ENCODE measurements at regions of chr16 and their contacts with region 1.

Region 1: DNA sequence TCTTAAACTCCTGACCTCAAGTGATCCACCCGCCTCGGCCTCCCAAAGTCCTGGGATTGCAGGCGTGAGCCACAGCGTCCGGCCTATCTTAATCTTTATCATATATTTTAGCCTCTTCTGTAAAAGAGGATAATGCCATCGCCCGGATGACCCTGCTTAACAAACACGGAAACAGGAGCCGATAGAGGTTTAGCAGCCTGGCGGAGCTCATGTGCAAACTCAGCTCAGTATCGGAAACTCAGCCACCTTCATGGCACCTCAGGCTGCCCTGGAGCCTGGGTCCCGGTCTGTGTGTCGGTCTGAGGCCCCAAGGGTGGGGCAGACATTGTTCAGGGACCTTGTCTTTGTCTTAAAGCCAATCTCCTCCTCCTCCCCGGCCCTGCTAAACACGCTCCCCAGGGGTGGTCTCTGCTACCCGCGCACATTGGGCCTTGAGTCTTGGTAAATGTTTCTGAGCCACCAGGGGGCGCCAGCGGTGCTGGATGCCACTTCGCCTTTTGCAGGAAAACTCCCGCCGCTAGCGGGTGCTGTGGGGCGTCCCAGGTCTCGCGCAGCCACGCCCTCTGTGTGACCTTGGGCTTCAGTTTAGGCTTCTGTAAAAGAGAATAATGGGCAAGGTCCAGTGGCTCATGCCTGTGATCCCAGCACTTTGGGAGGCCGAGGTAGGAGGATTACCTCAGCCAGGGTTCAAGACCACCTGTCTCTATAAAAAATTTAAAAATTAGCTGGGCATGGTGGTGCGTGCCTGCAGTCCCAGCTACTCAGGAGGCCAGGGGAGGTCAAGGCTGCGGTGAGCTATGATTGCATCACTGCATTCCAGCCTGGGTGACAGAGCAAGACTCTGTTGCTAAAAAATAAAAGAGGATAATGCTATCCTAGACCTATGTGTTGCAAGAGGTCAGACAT is 2.7 kb downstream of the CETP start:
- DNase-seq: peak; percentile 94
- ATAC-seq: peak; percentile 92
- H3K4me3 ChIP-seq: no peak overlapping the region
- H3K4me3 Mint-ChIP-seq: no peak overlapping the region
- H3K27ac ChIP-seq: peak overlapping the region; percentile 4 to 20
- H3K27ac Mint-ChIP-seq: peak overlapping the region; percentile 83
- H3K4me1 ChIP-seq: peaks cover 17 to 22% of the 10 kb centered on the region in 2 donors
- H3K4me1 Mint-ChIP-seq: peaks cover 23% of the 10 kb centered on the region
- H3K27me3 ChIP-seq: no peaks in the 10 kb centered on the region
- H3K27me3 Mint-ChIP-seq: no peaks in the 10 kb centered on the region
- CTCF ChIP-seq: peak; percentile 99

Region 2: DNA sequence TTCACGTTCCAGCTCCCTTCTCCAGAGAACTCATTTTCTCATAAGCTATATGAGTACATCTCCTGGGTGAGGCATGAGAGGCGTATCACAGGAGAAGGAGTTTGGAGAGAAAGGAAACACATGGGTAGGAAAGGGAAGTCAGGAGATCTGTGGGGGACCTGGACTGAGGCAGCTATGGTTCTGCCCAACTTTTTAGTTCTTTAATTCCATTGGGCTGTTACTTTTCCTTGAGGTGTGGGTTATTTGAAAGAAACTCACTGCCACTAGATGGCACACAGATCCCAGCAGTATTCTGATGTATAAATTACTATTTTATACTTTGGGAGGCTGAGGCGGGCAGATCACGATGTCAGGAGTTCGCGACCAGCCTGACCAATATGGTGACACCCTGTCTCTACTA is 171.0 kb before region 1 on chr16:
- CTCF ChIA-PET with region 1: interaction called, 10 read pairs
- POLR2A ChIA-PET with region 1: no interaction called
- intact Hi-C with region 1: no loop called
- DNase-seq: peak; percentile 33
- ATAC-seq: no peak
- H3K4me3 ChIP-seq: no peak overlapping the region
- H3K4me3 Mint-ChIP-seq: no peak overlapping the region
- H3K27ac ChIP-seq: no peak overlapping the region
- H3K27ac Mint-ChIP-seq: no peak overlapping the region
- H3K4me1 ChIP-seq: no peaks in the 10 kb centered on the region
- H3K4me1 Mint-ChIP-seq: no peaks in the 10 kb centered on the region
- H3K27me3 ChIP-seq: no peaks in the 10 kb centered on the region
- H3K27me3 Mint-ChIP-seq: no peaks in the 10 kb centered on the region
- CTCF ChIP-seq: no peak

Region 3: GRCh38 chr16:56950881-56951771 is 13.4 kb before region 1 on chr16:
- CTCF ChIA-PET with region 1: interaction called, 79 read pairs
- POLR2A ChIA-PET with region 1: interaction called, 6 read pairs
- intact Hi-C with region 1: loop called (anchors 1 kb)
- DNase-seq: peak; percentile 92
- ATAC-seq: peak; percentile 84
- H3K4me3 ChIP-seq: peak overlapping the region in 1 of 5 experiments; percentile 1
- H3K4me3 Mint-ChIP-seq: peak overlapping the region; percentile 68
- H3K27ac ChIP-seq: peak overlapping the region; percentile 42 to 58
- H3K27ac Mint-ChIP-seq: peak overlapping the region; percentile 83
- H3K4me1 ChIP-seq: peaks cover 24 to 26% of the 10 kb centered on the region in 2 donors
- H3K4me1 Mint-ChIP-seq: peaks cover 41% of the 10 kb centered on the region
- H3K27me3 ChIP-seq: no peaks in the 10 kb centered on the region
- H3K27me3 Mint-ChIP-seq: no peaks in the 10 kb centered on the region
- CTCF ChIP-seq: peak; percentile 49

Region 4: DNA sequence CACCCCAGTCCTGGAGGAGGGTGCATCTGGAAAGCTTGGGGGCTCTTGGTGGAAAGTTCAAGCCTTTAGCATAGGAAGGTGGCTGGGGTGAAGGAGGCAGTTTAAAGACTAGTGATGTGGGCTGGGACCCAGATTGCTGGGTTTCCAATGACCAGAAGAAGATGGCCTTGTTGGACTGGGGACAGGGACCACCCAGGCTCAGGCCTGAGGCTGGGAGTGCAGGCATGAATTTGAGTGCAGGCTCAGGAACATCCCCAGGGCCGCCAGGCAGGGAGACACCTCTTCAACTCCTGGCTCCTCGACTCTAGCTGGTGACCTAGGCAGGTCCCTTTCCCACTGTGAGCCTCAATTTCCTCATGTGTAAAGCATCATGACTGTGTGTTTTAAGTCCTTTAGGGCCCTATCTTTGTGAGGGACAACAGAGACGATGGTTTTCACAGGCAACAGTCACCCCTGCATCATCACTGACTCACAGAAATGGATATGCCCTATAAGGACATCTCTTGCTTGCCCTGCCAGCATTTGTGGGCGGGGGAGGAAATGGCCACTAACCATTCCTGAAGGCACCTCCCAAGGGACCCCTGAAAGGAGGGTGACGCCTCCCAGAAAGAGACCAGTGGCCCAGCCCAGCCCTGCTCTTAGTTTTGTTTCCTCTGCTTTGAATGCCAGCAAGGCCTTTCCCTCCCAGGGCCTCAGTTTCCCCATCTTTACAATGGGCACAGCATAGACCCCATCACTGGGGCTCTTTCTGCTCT is 36.0 kb after region 1 on chr16:
- CTCF ChIA-PET with region 1: interaction called, 11 read pairs
- POLR2A ChIA-PET with region 1: interaction called, 4 read pairs
- intact Hi-C with region 1: loop called (anchors 5 kb)
- DNase-seq: peak; percentile 41
- ATAC-seq: peak; percentile 73
- H3K4me3 ChIP-seq: no peak overlapping the region
- H3K4me3 Mint-ChIP-seq: peak overlapping the region; percentile 71
- H3K27ac ChIP-seq: peak overlapping the region; percentile 77 to 83
- H3K27ac Mint-ChIP-seq: peak overlapping the region; percentile 94
- H3K4me1 ChIP-seq: peaks cover 52 to 63% of the 10 kb centered on the region in 2 donors
- H3K4me1 Mint-ChIP-seq: peaks cover 88% of the 10 kb centered on the region
- H3K27me3 ChIP-seq: no peaks in the 10 kb centered on the region
- H3K27me3 Mint-ChIP-seq: no peaks in the 10 kb centered on the region
- CTCF ChIP-seq: no peak

Region 5: DNA sequence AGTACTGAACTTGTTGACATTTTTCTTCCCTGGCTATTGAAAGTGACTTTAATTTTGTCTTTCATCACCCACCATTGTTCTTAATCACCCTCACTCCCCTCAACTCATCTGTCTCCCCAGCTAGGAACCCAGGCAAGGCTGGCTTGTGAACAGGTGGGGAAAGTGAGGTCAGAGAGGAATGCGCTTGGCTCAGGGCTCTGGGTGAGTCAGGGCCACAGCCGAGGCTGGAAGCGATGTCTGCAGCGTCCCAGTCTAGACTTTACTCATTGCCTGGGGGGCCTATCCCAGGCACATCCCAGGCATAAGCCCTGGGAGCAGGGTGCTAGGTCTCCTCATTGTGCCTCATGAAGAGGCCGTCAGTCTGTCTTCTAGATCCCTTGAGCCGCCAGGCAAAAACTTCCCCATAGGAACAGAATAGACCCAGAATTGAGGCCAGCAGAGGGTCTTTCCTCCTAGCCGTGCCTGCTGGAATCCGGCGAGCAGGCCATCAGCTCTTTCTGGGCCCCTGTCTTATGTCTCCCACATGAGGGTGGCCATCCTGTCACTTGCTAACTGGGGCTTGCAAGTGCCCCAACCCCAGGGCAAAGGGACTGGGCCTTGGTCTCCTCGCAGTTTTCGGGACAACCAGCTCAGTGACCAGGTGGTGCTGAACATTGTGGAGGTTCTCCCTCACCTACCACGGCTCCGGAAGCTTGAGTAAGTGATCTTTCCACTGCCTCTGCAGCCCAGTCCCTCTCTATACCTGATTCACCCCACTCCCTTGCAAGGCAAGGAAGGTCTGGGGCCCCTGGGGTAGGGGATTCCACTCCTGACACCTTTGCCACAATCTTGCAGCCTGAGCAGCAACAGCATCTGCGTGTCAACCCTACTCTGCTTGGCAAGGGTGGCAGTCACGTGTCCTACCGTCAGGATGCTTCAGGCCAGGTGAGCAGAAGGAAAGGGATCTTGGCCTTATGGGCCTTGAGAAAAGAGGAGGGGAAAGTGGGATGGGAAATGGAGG is 65.0 kb after region 1 on chr16:
- CTCF ChIA-PET with region 1: interaction called, 12 read pairs
- POLR2A ChIA-PET with region 1: no interaction called
- intact Hi-C with region 1: no loop called
- DNase-seq: no peak
- ATAC-seq: no peak
- H3K4me3 ChIP-seq: no peak overlapping the region
- H3K4me3 Mint-ChIP-seq: no peak overlapping the region
- H3K27ac ChIP-seq: no peak overlapping the region
- H3K27ac Mint-ChIP-seq: peak overlapping the region; percentile 32
- H3K4me1 ChIP-seq: peaks cover 0 to 39% of the 10 kb centered on the region in 2 donors
- H3K4me1 Mint-ChIP-seq: peaks cover 31% of the 10 kb centered on the region
- H3K27me3 ChIP-seq: no peaks in the 10 kb centered on the region
- H3K27me3 Mint-ChIP-seq: no peaks in the 10 kb centered on the region
- CTCF ChIP-seq: no peak

Region 6: DNA sequence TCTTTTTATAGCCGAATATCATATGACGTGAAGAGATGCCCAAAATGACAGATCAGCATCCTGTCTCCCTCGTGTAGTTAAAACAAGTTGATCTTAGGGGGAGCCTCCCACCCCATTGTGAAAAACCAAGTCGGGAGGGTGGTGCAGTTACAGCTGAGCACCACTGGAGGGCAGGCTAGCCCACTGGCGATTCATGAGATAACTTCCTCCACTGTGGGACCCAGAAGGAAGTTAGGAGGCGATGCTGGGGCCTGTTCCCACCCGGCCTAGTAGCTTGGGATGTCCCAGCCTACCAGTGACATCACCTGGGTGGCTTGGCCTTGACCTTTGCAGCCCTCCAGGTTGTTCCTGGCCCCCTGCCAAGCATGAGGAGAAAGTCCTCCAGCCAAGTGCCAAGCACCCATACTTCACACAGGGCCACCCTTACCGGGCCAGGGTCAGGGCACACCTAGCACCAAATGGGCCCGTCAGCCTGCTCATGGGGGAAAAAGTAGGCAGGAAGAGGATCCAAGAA is 119.8 kb after region 1 on chr16:
- CTCF ChIA-PET with region 1: interaction called, 42 read pairs
- POLR2A ChIA-PET with region 1: no interaction called
- intact Hi-C with region 1: no loop called
- DNase-seq: peak; percentile 86
- ATAC-seq: peak; percentile 89
- H3K4me3 ChIP-seq: no peak overlapping the region
- H3K4me3 Mint-ChIP-seq: no peak overlapping the region
- H3K27ac ChIP-seq: no peak overlapping the region
- H3K27ac Mint-ChIP-seq: peak overlapping the region; percentile 13
- H3K4me1 ChIP-seq: peaks cover 4 to 8% of the 10 kb centered on the region in 2 donors
- H3K4me1 Mint-ChIP-seq: peaks cover 11% of the 10 kb centered on the region
- H3K27me3 ChIP-seq: no peaks in the 10 kb centered on the region
- H3K27me3 Mint-ChIP-seq: no peaks in the 10 kb centered on the region
- CTCF ChIP-seq: peak; percentile 98

Measured in B cell (primary cell).